Psoas muscle (tissue), 8 donors: ENCODE measurements at regions of chr14 and their contacts with region 1.

Region 1: GRCh38 chr14:21408147-21408546 is 24.3 kb upstream of the SUPT16H start:
- DNase-seq: no peak
- ATAC-seq: peak in 1 of 4 donors; percentile 32
- H3K4me3 ChIP-seq: no peak overlapping the region
- H3K27ac ChIP-seq: no peak overlapping the region
- H3K4me1 ChIP-seq: no peaks in the 10 kb centered on the region
- H3K27me3 ChIP-seq: no peaks in the 10 kb centered on the region
- CTCF ChIP-seq: no peak

Region 2: DNA sequence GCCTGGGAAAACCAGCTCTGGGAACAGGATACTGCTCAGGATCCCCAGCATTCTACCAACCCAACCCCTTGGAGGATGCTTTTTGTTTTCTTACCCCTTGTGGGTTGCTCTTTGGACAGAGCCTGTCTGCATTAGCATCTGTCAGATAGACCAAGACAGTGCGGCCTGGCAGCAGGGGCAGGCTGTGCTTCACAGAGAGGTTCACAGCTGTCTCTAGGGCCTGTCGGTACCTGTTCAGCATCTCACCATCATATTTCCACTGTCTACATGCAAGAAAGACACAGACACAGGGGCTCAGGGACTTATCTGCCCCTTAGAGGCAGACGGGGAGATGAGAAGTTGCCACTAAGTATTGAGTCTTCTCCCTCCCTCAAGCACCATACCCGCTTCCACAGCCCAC is 1016.6 kb before region 1 on chr14:
- intact Hi-C with region 1: loop called in 1 of 2 experiments (anchors 5 kb)
- DNase-seq: no peak
- ATAC-seq: no peak
- H3K4me3 ChIP-seq: no peak overlapping the region
- H3K27ac ChIP-seq: no peak overlapping the region
- H3K4me1 ChIP-seq: no peaks in the 10 kb centered on the region
- H3K27me3 ChIP-seq: no peaks in the 10 kb centered on the region
- CTCF ChIP-seq: no peak

Region 3: GRCh38 chr14:21308479-21309237 is 99.5 kb before region 1 on chr14:
- intact Hi-C with region 1: no loop called
- DNase-seq: peak; percentile 37 to 58
- ATAC-seq: peak; percentile 77 to 88 (median 84)
- H3K4me3 ChIP-seq: peak overlapping the region; percentile 53
- H3K27ac ChIP-seq: peak overlapping the region; percentile 52
- H3K4me1 ChIP-seq: no peaks in the 10 kb centered on the region
- H3K27me3 ChIP-seq: peaks cover 0 to 18% (median 3%) of the 10 kb centered on the region in 3 donors
- CTCF ChIP-seq: no peak

Region 4: DNA sequence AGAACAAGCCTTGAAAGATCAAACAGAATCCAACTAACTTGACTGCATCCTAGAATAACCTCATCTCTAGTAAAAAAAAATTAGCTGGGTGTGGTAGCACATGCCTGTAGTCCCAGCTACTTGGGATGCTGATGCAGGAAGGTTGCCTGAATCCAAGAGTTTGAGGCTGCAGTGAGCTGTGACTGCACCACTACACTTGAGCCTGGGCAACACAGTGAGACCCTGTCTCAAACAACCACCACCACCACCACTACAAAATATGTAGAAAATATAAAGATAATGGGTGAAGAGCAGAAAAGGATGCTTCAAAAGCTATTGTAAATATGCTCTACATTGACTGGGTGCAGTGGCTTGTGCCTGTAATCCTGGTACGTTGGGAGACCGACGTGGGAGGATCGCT is 51.6 kb before region 1 on chr14:
- intact Hi-C with region 1: loop called (anchors 5 kb)
- DNase-seq: no peak
- ATAC-seq: no peak
- H3K4me3 ChIP-seq: no peak overlapping the region
- H3K27ac ChIP-seq: no peak overlapping the region
- H3K4me1 ChIP-seq: no peaks in the 10 kb centered on the region
- H3K27me3 ChIP-seq: no peaks in the 10 kb centered on the region
- CTCF ChIP-seq: no peak

Region 5: GRCh38 chr14:21367582-21368144 is 40.5 kb before region 1 on chr14:
- intact Hi-C with region 1: loop called in 1 of 2 experiments (anchors 5 kb)
- DNase-seq: no peak
- ATAC-seq: no peak
- H3K4me3 ChIP-seq: no peak overlapping the region
- H3K27ac ChIP-seq: no peak overlapping the region
- H3K4me1 ChIP-seq: no peaks in the 10 kb centered on the region
- H3K27me3 ChIP-seq: no peaks in the 10 kb centered on the region
- CTCF ChIP-seq: no peak